PC-3 (cell line): ENCODE measurements at regions of chr11 and their contacts with region 1.

Region 1: DNA sequence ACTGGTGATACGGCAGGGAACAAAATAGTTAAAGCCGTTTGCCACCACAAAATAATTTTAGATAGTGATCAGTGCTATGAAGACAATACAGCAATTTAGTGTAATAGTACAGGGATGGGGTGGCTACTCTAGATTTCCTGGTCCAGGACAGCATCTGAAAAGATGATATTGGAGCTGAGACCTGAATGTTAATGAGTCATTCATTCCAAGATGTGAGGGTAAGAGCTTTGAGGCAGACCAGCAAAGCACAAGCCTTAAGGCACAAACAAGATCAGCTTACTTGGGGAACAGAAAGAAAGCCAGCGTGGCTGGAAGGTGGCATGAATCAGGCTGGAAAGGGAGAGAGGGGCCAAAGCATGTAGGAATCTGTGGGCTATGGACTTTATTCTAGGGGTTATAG is 132.3 kb downstream of the TRIM44 start:
- DNase-seq: peak; percentile 77
- ATAC-seq: peak; percentile 33
- H3K4me3 ChIP-seq: no peak overlapping the region
- H3K27ac ChIP-seq: peak overlapping the region; percentile 16
- H3K4me1 ChIP-seq: peaks cover 56% of the 10 kb centered on the region
- H3K27me3 ChIP-seq: no peaks in the 10 kb centered on the region
- CTCF ChIP-seq: no peak

Region 2: DNA sequence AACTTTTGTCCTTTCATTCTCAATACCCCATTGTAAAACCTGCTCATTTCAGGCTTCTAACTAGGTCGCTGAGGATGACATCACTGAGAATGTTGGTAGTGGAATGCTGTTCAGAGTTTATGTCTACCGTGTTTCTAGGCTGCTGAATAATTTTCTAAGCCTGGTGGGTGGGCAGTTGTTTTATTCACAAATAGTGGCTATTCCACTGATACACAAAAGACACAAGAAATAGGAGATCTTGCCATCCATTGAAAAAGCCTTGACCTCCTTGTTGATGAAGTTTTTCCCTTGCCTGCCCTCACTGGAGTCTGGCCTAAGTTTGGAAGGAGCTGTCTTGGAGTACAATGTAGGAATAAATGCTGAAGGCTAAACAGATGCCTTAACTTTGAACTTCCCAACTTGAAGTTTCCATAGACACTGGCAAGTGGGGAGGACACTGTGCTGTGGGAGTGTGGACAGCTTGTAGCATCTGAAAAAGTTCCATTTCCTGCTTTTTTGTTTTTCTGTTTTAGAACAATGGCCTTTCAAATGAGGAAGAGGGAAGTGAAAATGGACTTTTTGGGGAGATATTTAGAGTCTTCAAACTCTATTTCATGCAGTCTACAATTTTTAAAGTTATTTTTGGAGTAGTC is 73.1 kb before region 1 on chr11:
- CTCF ChIA-PET with region 1: no interaction called
- POLR2A ChIA-PET with region 1: no interaction called
- intact Hi-C with region 1: loop called (anchors 10 kb)
- DNase-seq: no peak
- ATAC-seq: no peak
- H3K4me3 ChIP-seq: no peak overlapping the region
- H3K27ac ChIP-seq: no peak overlapping the region
- H3K4me1 ChIP-seq: peaks cover 10% of the 10 kb centered on the region
- H3K27me3 ChIP-seq: no peaks in the 10 kb centered on the region
- CTCF ChIP-seq: no peak